ENCODE measurements at regions of chr2 and their contacts with region 1.

Region 1: GRCh38 chr2:206556357-206556949 is 85.8 kb upstream of the FAM237A start:
- DNase-seq: peak in 1 of 2 experiments; percentile 30
- H3K4me3 ChIP-seq: no peak overlapping the region
- H3K4me3 Mint-ChIP-seq: no peak overlapping the region
- H3K27ac Mint-ChIP-seq: no peak overlapping the region
- H3K4me1 ChIP-seq: no peaks in the 10 kb centered on the region
- H3K4me1 Mint-ChIP-seq: no peaks in the 10 kb centered on the region
- H3K27me3 ChIP-seq: no peaks in the 10 kb centered on the region
- H3K27me3 Mint-ChIP-seq: no peaks in the 10 kb centered on the region
- CTCF ChIP-seq: peak; percentile 43 to 56

Region 2: GRCh38 chr2:206392118-206392517 is 164.3 kb before region 1 on chr2:
- CTCF ChIA-PET with region 1: interaction called, 11 read pairs
- POLR2A ChIA-PET with region 1: no interaction called
- intact Hi-C with region 1: loop called (anchors 1 kb)
- DNase-seq: peak; percentile 46 to 68
- H3K4me3 ChIP-seq: no peak overlapping the region
- H3K4me3 Mint-ChIP-seq: no peak overlapping the region
- H3K27ac Mint-ChIP-seq: no peak overlapping the region
- H3K4me1 ChIP-seq: no peaks in the 10 kb centered on the region
- H3K4me1 Mint-ChIP-seq: peaks cover 4% of the 10 kb centered on the region
- H3K27me3 ChIP-seq: no peaks in the 10 kb centered on the region
- H3K27me3 Mint-ChIP-seq: no peaks in the 10 kb centered on the region
- CTCF ChIP-seq: peak; percentile 73 to 85

Region 3: GRCh38 chr2:206502729-206503128 is 53.7 kb before region 1 on chr2:
- CTCF ChIA-PET with region 1: no interaction called
- POLR2A ChIA-PET with region 1: no interaction called
- intact Hi-C with region 1: no loop called
- DNase-seq: no peak
- H3K4me3 ChIP-seq: no peak overlapping the region
- H3K4me3 Mint-ChIP-seq: no peak overlapping the region
- H3K27ac Mint-ChIP-seq: no peak overlapping the region
- H3K4me1 ChIP-seq: no peaks in the 10 kb centered on the region
- H3K4me1 Mint-ChIP-seq: no peaks in the 10 kb centered on the region
- H3K27me3 ChIP-seq: no peaks in the 10 kb centered on the region
- H3K27me3 Mint-ChIP-seq: no peaks in the 10 kb centered on the region
- CTCF ChIP-seq: peak in 1 of 2 experiments; percentile 40

Region 4: GRCh38 chr2:206688453-206688852 is 132.0 kb after region 1 on chr2:
- CTCF ChIA-PET with region 1: no interaction called
- POLR2A ChIA-PET with region 1: no interaction called
- intact Hi-C with region 1: no loop called
- DNase-seq: no peak
- H3K4me3 ChIP-seq: no peak overlapping the region
- H3K4me3 Mint-ChIP-seq: no peak overlapping the region
- H3K27ac Mint-ChIP-seq: no peak overlapping the region
- H3K4me1 ChIP-seq: no peaks in the 10 kb centered on the region; the same call in 1 of the 2 replicates
- H3K4me1 Mint-ChIP-seq: no peaks in the 10 kb centered on the region
- H3K27me3 ChIP-seq: no peaks in the 10 kb centered on the region
- H3K27me3 Mint-ChIP-seq: peaks cover 19% of the 10 kb centered on the region
- CTCF ChIP-seq: no peak